ENCODE measurements at regions of chr7 and their contacts with region 1.

Region 1: DNA sequence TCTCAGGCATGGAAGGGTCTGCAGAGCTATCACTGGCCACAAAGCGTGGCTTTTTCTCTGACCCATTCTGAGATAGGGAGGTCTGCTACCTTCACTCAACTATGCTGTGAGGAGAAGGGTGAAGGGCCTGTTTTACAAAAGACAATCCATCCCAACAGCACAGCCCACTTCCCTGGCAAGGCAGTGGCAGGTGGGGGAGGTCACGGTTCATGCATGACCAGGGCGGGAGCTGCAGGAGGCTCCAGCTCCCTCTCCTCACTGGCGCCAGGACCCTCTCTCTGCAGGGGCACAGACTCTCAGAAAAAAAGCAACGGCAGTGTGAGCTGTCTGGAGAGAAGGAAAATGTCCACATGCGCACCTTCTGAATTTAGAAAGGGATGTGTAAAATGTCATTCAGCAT is 28.5 kb downstream of the GRB10 start:
- DNase-seq: no peak
- ATAC-seq: no peak
- H3K4me3 Mint-ChIP-seq: no peak overlapping the region
- H3K27ac Mint-ChIP-seq: no peak overlapping the region
- H3K4me1 Mint-ChIP-seq: peaks cover 11% of the 10 kb centered on the region
- H3K27me3 Mint-ChIP-seq: peaks cover 2% of the 10 kb centered on the region

Region 2: DNA sequence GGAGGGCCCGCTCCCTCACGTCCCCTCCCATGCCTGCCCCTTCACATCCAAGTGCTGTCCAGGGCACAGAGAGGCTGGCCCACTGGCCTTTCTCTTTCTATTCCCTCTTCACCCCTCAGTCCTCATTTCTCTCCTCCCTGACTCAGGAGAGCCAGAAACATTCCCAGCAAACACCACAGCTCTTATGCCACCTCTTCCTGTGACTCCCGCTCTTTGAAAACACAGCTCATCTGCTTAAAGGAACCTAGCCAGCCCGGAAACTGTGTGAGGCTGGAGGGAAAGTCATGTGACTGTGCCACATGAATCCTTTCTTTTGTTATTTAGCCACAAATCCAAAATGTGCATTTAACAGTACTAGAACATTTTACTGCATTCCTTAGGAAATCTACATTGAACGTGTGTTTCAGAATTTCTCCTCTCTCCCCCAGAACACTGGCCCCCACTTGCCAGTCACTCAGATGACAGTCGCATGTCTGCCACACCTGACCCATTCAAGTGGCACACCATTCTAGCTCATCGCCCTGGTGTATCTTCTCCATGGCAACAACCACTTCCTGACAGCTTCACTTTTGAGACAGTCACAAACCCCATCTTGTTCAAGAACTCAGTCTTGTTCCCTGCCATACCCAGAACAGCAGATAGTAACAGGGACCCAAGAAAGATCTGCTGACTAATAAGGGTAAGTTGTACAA is 14.4 kb before region 1 on chr7:
- POLR2A ChIA-PET with region 1: interaction called, 10 read pairs
- DNase-seq: peak; percentile 51
- ATAC-seq: peak; percentile 99
- H3K4me3 Mint-ChIP-seq: peak overlapping the region; percentile 69
- H3K27ac Mint-ChIP-seq: peak overlapping the region; percentile 85
- H3K4me1 Mint-ChIP-seq: peaks cover 22% of the 10 kb centered on the region
- H3K27me3 Mint-ChIP-seq: no peaks in the 10 kb centered on the region

Region 3: DNA sequence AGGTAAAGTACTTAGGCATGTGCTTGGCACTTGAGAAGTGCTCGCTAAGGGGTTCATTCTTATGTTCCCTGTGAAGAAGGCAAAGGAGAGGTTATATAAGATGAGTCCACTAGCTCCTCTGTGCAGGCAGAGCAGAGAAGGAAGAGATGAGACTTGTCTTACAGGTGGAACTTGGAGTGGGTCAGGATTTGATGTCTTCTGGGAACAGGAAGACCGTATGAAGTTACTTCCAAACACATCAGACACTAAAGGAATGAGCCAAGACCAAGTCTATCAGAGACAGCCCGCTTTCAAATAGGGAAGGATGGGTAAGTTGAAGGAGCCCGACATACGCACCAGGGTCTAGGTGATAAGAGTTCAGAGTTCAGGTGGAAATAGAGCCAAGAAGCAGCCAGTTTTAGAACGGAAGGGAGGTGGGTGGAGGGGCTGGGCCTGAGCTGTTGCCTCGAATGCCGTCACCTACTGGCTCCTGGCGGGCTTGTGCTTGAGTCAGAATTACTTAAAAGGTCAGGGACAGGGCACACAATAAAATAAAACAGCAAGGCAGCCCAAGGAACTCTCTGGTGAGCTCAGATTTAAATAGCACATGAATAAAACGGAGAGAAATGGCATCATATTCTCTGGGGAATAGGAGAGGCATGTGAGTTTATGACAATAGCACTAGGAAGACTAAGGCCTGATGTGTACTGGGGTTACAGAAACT is 84.6 kb after region 1 on chr7:
- POLR2A ChIA-PET with region 1: no interaction called
- DNase-seq: no peak
- ATAC-seq: no peak
- H3K4me3 Mint-ChIP-seq: no peak overlapping the region
- H3K27ac Mint-ChIP-seq: no peak overlapping the region
- H3K4me1 Mint-ChIP-seq: no peaks in the 10 kb centered on the region
- H3K27me3 Mint-ChIP-seq: peaks cover 18% of the 10 kb centered on the region